ENCODE measurements at regions of chr19 and their contacts with region 1.

Region 1: DNA sequence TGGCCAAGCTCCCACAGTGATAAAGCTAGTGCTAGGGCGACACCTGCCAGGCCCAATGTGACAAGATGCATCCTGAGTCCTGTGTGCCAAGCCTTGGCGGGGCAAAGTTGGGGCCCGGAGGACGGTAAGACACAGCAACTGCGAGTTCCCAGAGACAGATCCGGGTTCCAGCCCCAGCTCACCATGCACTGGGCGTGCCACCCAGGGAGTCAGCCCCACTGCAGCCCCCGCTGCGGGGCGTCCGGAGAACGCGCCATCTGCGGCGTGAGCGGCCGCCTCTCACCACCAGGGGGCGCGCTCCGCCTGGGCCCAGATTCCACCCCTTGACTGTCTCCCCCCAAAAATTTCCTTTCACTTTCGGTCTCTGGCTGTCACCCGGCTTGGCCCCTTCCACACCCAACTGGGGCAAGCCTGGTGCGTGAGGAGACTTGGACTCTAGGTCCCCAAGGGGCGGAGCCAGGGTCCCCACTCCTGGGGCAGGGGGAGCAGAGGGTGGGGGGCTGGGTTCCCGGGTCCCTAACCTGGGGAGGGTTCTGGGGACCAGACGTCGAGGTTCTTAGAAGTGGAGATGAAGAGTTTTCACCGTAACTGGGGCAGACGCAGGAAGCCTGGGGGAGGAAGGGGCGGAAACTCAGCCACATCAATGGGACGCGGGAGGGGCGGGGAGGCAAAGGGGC is at the start of gene FLT3LG:
- DNase-seq: peak; percentile 24 to 85 (median 65)

Region 2: DNA sequence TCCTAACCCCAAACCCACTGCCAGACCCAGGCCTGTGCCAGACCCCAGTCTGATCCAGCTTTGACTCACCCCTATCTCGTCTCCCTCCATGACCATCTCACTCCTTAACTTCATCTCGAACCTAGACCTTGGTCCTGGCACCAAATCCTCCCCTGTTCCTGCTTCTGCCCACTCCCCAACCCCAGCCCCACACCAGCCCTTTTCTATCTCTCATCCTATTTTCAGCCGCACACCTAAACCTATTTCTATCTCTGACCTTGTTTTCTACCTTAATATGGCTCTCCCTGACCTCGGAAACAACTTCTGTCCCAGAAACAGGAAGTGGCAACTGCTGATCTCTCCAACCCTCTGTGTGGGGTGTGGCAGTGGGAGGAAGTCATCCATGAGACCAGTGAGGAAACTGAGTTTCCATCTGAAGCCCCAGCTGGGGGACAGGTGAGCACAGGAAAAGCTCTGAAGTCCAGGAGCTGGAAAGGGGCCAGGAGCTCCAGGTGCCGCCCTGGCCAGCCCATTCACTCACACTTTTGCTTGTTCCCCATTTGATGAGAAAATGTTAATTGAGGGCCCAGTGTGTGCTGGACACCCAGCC is 64.5 kb before region 1 on chr19:
- intact Hi-C with region 1: no loop called
- DNase-seq: no peak

Region 3: DNA sequence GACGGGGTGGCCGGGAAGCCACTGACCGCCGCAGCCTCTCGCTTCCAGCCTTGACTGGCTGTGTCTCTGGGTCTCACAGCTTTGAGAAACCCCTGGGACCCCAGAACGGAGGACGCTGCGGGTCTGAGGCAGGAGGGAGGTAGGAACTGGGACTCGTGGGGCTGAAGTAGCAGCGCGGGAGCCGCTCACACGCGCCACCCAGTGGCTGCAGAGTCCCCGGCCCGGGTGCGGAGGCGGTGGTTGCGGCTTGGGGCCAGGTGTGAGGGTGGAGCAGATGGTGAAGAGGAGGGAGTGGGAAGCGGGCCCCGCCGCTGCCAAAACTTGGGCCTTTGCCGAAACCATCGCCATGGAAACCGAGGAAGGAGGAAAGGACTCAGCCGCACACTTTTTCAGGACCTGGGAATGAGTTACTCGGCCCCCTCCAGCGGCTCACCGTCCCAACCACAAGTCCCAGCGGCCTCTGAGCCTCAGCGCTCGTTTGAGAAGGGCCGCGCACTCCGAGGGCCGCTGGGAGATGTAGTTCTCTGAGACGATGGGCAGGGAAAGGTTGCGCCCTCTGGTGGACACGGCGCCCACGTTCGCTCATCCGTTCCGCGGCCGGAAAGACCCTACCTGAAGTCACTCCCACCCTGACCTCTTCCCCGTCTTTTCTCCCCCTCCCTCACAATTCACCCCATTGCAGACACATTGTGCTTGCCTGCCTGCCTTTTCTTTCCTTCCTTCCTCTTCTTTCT is 30.5 kb before region 1 on chr19:
- intact Hi-C with region 1: no loop called
- DNase-seq: peak; percentile 90 to 98 (median 95)

Region 4: DNA sequence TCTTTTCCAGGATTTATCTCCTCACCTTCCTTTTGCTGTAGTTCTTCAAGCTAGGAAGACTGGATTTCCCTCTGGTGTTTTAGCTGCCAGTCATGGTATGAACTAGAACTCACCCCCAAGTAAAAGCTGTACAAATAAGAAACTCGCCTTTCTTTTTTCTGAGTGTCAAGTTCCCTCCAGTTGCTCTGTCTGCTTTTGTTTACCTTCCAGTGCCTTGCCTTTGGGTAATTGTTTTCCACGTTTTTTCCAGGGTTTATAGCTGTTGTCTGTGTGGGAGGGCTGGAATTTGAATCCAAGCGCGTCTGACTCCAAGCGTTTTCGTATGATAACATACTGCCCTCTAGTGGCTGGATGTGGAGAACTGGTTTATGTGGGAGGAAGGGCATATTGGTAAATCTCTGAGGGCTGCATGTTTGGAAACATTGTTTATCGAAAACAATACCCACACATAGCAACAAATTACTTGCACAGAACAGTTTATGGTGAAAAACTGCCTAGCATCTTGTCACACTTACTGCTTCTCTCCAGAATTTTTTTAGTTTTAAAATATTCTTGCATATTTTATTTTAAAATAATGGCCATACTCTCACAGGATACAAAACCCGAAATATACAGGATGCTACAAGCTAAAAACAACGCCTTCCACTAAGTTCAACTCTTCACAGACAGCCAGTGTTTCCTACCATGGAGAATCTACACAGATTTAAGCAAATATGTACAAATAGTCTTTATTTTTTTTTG is 73.0 kb after region 1 on chr19:
- intact Hi-C with region 1: loop called (anchors 2 kb)
- DNase-seq: peak in 39 of 42 donors; percentile 33 to 92 (median 74)

Measured in head of caudate nucleus (tissue), 42 donors.